ENCODE measurements at regions of chr16 and their contacts with region 1.

Region 1: DNA sequence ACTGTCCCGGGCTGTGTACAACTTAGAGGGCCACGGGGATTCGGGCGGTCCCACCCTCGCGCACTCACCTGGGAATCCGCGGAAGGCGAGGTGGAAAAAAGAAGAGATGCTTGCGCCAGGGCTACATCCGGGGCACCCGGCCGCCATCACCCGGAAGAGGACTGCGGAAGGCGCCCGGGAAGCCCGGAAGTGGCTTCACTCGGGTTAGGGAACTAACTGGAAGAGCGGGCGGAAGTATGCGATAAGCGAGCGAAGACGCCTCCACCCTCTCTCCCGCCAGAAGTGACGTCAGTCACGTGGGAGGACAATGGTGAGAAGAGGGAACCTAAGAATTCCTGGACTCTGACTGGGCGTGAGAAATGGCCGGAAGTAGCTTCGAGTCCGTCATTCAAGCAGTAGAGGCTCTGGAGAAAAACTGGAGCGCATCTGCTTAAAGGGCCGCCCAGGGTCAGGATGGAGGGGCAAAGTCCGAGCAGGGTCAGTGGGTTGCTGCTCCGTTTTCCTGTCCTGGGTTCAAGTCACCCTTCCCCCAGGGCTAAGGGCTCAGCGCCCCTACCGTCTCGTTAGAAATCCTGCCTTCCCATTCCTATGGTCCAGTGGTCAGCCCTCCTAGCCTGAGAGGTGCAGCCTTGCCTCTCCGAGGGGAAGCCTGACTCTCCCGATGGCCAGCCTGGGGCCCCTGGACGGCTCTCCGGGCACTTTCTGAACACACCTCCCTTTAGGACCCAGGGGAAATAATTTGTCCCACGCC is at the start of gene CD2BP2:
- DNase-seq: peak; percentile 100
- H3K4me3 Mint-ChIP-seq: peak within 1 kb of the TSS; percentile 94
- H3K27ac Mint-ChIP-seq: peak within 1 kb of the TSS; percentile 97
- H3K4me1 Mint-ChIP-seq: peaks cover 35% of the 10 kb centered on the region
- H3K27me3 Mint-ChIP-seq: no peaks in the 10 kb centered on the region
- CTCF ChIP-seq: no peak
- total RNA-seq, gene CD2BP2: 48.4 and 58.9 TPM in 2 replicates

Region 2: GRCh38 chr16:30163538-30163937 is 191.8 kb before region 1 on chr16:
- CTCF ChIA-PET with region 1: no interaction called
- POLR2A ChIA-PET with region 1: no interaction called
- intact Hi-C with region 1: no loop called
- DNase-seq: no peak
- H3K4me3 Mint-ChIP-seq: no peak overlapping the region
- H3K27ac Mint-ChIP-seq: no peak overlapping the region
- H3K4me1 Mint-ChIP-seq: no peaks in the 10 kb centered on the region
- H3K27me3 Mint-ChIP-seq: no peaks in the 10 kb centered on the region
- CTCF ChIP-seq: no peak

Region 3: DNA sequence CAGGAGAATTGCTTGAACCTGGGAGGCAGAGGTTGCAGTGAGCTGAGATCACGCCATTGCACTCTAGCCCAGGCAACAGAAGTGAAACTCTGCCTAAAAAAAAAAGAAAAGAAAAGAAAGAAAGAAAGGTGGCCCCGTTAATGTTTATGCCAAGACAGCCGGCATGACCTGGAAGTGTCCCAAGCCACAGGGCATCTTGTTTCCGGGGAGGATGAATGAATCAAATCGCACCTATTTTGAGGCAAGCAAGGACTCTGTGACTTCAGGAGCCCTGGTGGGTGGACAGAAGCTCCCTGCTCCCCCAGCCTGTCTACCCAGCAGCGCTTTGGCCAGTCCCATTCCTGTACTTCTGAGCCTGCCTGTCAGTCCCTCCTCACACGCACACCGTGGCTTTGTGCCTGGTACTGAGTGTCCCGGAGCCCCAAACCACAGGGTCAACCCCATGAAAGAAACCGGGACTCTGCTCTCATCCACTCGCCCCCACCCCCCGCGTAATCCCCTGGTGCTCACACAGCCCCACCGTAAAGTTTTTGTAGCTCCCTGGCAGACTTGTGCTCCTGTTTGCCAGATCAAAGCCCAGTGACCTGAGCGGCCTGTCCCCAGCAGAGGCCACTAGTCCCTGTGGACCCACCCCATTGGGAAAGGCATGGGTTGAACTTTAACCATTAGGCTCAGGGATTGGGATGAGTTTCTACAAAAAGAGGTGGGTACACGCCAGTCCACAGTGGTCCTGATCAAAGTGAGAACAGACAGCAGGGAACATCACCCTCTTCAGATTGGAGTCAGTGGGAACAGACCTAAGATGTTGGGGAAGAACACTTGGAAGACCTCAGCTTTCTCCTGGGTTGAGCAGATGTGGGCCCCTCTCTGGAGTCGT is 19.5 kb before region 1 on chr16:
- CTCF ChIA-PET with region 1: interaction called, 5 read pairs
- POLR2A ChIA-PET with region 1: interaction called, 44 read pairs
- intact Hi-C with region 1: loop called (anchors 1 kb)
- DNase-seq: peak; percentile 72
- H3K4me3 Mint-ChIP-seq: peak overlapping the region; percentile 99
- H3K27ac Mint-ChIP-seq: peak overlapping the region; percentile 83
- H3K4me1 Mint-ChIP-seq: peaks cover 8% of the 10 kb centered on the region
- H3K27me3 Mint-ChIP-seq: no peaks in the 10 kb centered on the region
- CTCF ChIP-seq: no peak

Region 4: GRCh38 chr16:30370444-30371247 is 15.3 kb after region 1 on chr16 and contains the start of gene TBC1D10B:
- CTCF ChIA-PET with region 1: interaction called, 7 read pairs
- POLR2A ChIA-PET with region 1: interaction called, 132 read pairs
- intact Hi-C with region 1: no loop called
- DNase-seq: peak; percentile 100
- H3K4me3 Mint-ChIP-seq: peak within 1 kb of the TSS; percentile 78
- H3K27ac Mint-ChIP-seq: peak within 1 kb of the TSS; percentile 89
- H3K4me1 Mint-ChIP-seq: peaks cover 44% of the 10 kb centered on the region
- H3K27me3 Mint-ChIP-seq: no peaks in the 10 kb centered on the region
- CTCF ChIP-seq: no peak
- total RNA-seq, gene TBC1D10B: 46.5 and 48.0 TPM in 2 replicates

Region 5: DNA sequence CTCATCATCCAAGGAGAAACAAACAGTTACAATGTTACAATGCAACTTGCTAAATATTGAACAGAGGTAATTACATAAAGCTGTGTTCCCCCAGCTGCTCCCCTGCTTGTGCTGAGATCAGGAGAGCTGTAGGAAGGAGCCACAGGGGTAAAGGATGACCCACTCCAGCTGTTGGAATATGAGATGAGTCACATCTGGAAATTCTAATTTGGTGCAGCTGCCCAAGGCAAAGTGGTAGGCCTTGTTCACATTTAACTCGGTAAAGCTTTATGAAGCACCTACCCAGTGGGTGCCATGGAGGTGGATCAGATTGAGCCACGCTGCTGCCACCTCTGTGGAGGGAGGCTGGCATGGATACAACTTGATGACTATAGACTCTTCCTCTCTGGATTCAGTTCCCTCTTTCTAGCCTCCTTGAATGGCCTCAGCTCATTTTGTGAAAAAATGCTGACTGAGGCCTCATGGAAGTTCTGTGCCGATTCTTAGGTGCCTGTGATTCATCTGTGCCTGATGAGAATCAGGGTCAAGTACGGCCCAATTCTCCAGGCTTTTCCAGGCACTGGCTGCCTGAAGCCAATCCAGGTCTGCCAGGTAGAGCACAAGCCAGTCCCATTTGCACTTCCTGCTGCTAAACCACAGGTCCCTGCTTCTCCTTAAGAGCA is 247.4 kb after region 1 on chr16:
- CTCF ChIA-PET with region 1: no interaction called
- POLR2A ChIA-PET with region 1: no interaction called
- intact Hi-C with region 1: no loop called
- DNase-seq: no peak
- H3K4me3 Mint-ChIP-seq: no peak overlapping the region
- H3K27ac Mint-ChIP-seq: no peak overlapping the region
- H3K4me1 Mint-ChIP-seq: no peaks in the 10 kb centered on the region
- H3K27me3 Mint-ChIP-seq: no peaks in the 10 kb centered on the region
- CTCF ChIP-seq: no peak